ENCODE measurements at regions of chr6 and their contacts with region 1.

Region 1: DNA sequence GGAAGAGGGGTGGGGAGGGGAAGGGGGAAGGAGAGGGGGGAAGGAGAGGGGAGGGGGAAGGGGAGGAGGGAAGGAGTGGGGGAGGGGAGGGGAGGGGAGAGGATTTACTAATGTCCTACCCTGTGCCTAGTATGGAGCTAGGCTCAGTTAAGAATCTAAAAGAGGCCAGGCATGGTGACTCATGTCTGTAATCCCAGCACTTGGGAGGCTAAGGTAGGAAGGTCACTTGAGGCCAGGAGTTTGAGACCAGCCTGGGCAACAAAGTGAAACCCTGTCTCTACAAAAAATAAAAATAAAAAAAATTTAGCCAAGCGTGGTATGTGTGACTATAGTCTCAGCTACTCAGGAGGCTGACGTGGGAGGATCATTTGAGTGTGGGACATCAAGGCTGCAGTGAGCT is 13.0 kb downstream of the UBE2J1 start:
- DNase-seq: no peak
- CTCF ChIP-seq: no peak

Region 2: DNA sequence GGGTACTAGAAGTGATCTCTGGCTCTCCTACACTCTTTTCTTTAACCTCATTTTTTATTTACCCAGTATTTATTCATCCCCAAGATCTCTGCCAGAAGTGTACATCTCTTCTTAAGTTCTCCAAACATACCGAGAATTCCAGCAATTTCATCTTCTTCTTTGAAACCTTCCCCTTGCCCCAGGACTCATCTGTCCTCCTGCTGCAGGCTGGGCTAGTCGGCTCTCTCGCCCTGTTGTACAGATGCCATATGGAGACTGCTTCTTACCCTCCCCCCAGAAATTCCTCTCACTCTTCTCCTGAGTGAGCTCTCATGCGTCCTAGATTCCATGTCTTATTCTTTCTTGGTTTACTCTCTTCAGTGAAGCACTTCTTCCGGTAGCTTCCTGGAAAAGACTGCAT is 280.9 kb before region 1 on chr6:
- CTCF ChIA-PET with region 1: no interaction called
- POLR2A ChIA-PET with region 1: no interaction called
- DNase-seq: no peak
- CTCF ChIP-seq: no peak

Region 3: GRCh38 chr6:89352278-89353117 is 12.9 kb after region 1 on chr6 and contains the start of gene UBE2J1:
- CTCF ChIA-PET with region 1: interaction called, 19 read pairs
- POLR2A ChIA-PET with region 1: interaction called, 6 read pairs
- DNase-seq: peak; percentile 81
- CTCF ChIP-seq: no peak